Dorsolateral prefrontal cortex (tissue), 120 donors: ENCODE measurements at regions of chr2 and their contacts with region 1.

Region 1: GRCh38 chr2:162221064-162221463 is 22.2 kb downstream of the FAP start:
- DNase-seq: peak in 8 of 10 donors; percentile 8 to 77 (median 60)
- H3K4me3 ChIP-seq: no peak overlapping the region
- H3K27ac ChIP-seq: no peak overlapping the region
- H3K27me3 ChIP-seq: no peaks in the 10 kb centered on the region
- CTCF ChIP-seq: peak; percentile 24 to 93 (median 81)

Region 2: GRCh38 chr2:162188451-162188850 is 32.6 kb before region 1 on chr2:
- intact Hi-C with region 1: no loop called
- DNase-seq: peak in 1 of 10 donors; percentile 28
- H3K4me3 ChIP-seq: no peak overlapping the region
- H3K27ac ChIP-seq: no peak overlapping the region
- H3K27me3 ChIP-seq: no peaks in the 10 kb centered on the region
- CTCF ChIP-seq: no peak

Region 3: DNA sequence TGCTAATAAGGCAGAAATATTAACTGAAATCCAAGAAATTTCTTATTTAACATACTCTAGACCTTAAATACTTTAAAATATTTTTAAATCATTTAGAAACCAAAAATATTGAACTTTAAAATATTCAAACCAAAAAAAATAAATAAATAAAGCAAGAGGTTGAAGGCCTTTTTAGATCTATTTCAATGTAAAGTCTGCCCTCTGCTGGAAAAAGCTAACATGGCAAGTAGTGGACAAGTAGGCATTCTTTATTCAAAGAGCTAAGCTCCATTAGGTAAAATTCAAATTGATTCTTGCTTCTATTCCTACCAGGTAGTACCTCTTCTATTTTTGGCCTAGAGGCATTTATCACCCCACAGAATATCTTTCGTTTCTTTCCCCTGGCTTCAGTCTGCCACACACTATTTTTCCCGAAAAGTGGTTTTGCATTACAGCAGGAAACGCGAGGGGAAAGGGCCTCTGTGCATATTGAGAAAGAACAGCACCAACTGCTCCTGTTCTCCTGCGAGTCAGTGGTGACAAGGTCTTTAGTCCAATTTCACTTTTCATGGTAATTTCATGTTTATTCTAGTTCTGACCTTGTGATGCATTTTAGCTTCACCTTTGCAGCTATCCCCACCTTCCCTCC is 77.0 kb after region 1 on chr2:
- intact Hi-C with region 1: loop called (anchors 1 to 2 kb)
- DNase-seq: peak in 3 of 10 donors; percentile 37 to 71 (median 45)
- H3K4me3 ChIP-seq: no peak overlapping the region
- H3K27ac ChIP-seq: peak overlapping the region in 47 of 59 donors; percentile 1 to 86 (median 61)
- H3K27me3 ChIP-seq: no peaks in the 10 kb centered on the region
- CTCF ChIP-seq: peak; percentile 80 to 98 (median 92)